Endothelial cell of umbilical vein (primary cell): ENCODE measurements at regions of chr20 and their contacts with region 1.

Region 1: GRCh38 chr20:35558451-35558850 is 16.6 kb downstream of the ERGIC3 start:
- DNase-seq: no peak
- H3K4me3 ChIP-seq: no peak overlapping the region
- H3K27ac ChIP-seq: no peak overlapping the region
- H3K4me1 ChIP-seq: no peaks in the 10 kb centered on the region
- H3K27me3 ChIP-seq: no peaks in the 10 kb centered on the region
- CTCF ChIP-seq: no peak
- POLR2A ChIP-seq: no peak

Region 2: GRCh38 chr20:35680452-35681183 is 122.2 kb after region 1 on chr20:
- CTCF ChIA-PET with region 1: no interaction called
- POLR2A ChIA-PET with region 1: interaction called, 12 read pairs
- dilution Hi-C with region 1: no loop called
- intact Hi-C with region 1: no loop called
- DNase-seq: no peak
- H3K4me3 ChIP-seq: no peak overlapping the region
- H3K27ac ChIP-seq: no peak overlapping the region
- H3K4me1 ChIP-seq: no peaks in the 10 kb centered on the region
- H3K27me3 ChIP-seq: no peaks in the 10 kb centered on the region
- CTCF ChIP-seq: no peak
- POLR2A ChIP-seq: no peak